ENCODE measurements at regions of chr12 and their contacts with region 1.

Region 1: DNA sequence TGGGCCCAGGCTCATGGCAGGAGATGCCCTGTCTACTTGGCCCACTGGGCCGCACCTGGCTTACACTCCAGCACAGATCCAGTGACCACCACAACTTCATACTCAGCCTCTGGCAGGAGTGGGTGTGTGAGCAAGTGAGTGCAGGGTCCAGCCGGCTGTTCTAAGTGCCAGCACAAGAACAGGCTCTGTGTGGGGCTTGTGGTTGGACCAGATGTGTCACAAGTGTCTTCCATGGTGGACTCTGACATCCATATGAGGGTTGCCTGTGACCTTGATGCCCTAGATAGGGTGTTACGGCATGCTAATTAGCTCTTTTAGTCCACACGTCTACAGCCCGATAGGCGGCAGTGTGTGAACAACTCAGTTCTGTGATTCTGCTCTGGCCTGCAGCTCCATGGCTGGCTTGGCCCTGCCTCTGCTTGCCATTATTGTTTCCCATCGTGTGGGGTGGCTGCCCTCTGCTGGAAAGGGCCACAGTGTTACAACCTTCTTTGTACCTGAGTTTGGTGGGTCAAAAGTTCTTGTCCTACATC is 1089.1 kb downstream of the SLC6A15 start:
- DNase-seq: peak; percentile 76
- H3K4me3 Mint-ChIP-seq: no peak overlapping the region
- H3K27ac Mint-ChIP-seq: no peak overlapping the region
- H3K4me1 Mint-ChIP-seq: no peaks in the 10 kb centered on the region
- H3K27me3 Mint-ChIP-seq: no peaks in the 10 kb centered on the region

Region 2: GRCh38 chr12:82527165-82527780 is 1296.2 kb before region 1 on chr12:
- intact Hi-C with region 1: loop called (anchors 10 kb)
- DNase-seq: peak; percentile 68
- H3K4me3 Mint-ChIP-seq: no peak overlapping the region
- H3K27ac Mint-ChIP-seq: no peak overlapping the region
- H3K4me1 Mint-ChIP-seq: no peaks in the 10 kb centered on the region
- H3K27me3 Mint-ChIP-seq: no peaks in the 10 kb centered on the region

Region 3: GRCh38 chr12:83739607-83740006 is 83.9 kb before region 1 on chr12:
- intact Hi-C with region 1: no loop called
- DNase-seq: no peak
- H3K4me3 Mint-ChIP-seq: no peak overlapping the region
- H3K27ac Mint-ChIP-seq: no peak overlapping the region
- H3K4me1 Mint-ChIP-seq: no peaks in the 10 kb centered on the region
- H3K27me3 Mint-ChIP-seq: no peaks in the 10 kb centered on the region

Region 4: GRCh38 chr12:84470361-84470760 is 646.9 kb after region 1 on chr12:
- intact Hi-C with region 1: no loop called
- DNase-seq: no peak
- H3K4me3 Mint-ChIP-seq: no peak overlapping the region
- H3K27ac Mint-ChIP-seq: no peak overlapping the region
- H3K4me1 Mint-ChIP-seq: no peaks in the 10 kb centered on the region
- H3K27me3 Mint-ChIP-seq: no peaks in the 10 kb centered on the region

Region 5: DNA sequence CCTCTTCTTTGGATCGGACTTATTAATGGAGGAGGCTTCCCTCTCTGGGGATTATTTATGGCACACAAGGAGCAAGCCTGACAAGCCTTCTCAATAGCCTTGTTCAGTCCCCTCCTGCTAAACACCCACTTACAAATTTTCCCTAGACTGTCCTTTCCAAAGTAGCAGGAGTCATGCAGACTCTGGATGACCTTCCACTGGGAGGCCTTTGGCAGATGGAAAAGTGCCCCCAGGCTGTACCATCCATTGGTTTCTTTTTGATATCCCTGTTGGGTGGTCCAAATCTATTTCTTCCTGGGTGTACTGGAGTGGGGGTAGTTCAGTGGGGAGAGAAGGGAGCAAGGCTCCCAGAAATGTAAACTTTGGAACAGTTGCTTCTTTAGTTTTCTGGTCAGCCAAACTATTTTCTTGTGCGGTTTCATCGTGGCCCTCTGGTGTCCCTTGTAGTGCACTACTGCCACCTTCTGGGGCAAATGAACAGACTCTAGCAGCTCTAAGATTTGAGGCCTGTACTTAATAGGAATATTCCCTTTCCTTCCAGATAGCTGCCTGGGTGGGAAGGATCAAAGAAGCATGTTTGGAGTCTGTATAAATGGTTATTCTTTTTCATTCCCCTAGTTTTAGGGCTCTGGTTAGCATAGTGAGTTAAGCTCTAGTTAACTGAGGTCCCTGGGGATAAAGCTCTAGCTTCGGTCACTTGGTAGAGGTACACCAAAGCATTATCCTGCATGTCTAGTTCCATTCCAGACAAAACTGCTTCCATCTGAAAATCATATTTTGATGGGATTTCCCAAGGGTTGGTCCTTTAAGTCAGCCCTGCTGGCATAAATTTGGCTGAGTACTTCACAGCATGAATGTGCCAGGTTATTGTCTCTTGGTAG is 679.6 kb after region 1 on chr12:
- intact Hi-C with region 1: loop called (anchors 5 kb)
- DNase-seq: peak; percentile 65
- H3K4me3 Mint-ChIP-seq: no peak overlapping the region
- H3K27ac Mint-ChIP-seq: no peak overlapping the region
- H3K4me1 Mint-ChIP-seq: no peaks in the 10 kb centered on the region
- H3K27me3 Mint-ChIP-seq: no peaks in the 10 kb centered on the region